AG04449 (cell line): ENCODE measurements at regions of chr11 and their contacts with region 1.

Region 1: GRCh38 chr11:45371251-45372115 is 85.3 kb upstream of the SYT13 start:
- DNase-seq: no peak
- H3K4me3 ChIP-seq: no peak overlapping the region
- CTCF ChIP-seq: peak; percentile 93

Region 2: DNA sequence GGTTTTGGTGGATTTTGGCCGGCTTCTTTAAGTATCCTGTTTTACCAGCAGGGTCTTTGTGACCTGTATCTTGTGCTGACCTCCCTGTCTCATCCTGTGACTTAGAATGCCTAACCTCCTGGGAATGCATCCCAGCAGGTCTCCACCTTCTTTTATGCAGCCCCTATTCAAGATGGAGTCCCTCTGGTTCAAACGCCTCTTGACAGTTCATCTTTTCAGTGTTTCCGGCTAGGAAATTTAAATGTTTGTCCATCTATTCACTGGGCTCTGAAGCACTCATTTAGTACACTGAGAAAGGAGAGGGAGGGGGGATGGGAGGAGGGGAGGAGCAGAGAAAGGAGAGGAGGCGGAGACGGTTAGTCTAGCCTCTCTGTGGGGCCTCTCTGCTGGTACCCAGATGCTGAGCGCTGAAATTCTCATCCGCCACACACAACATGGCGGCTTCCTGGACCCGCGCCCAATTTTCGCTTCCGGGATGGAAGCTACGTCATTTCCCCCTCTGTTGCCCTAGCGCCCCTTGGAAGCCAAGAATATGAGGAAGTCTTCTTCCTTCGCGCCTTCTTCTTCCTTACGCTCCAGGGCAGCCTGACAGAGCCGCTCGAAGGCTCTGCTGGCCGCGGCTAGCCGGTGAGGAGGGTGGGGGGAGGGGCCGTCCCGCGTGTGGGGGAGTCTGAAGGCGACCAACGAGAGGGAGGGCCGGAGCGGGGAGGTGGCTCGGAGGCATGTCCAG is 16.3 kb before region 1 on chr11:
- CTCF ChIA-PET with region 1: interaction called, 15 read pairs
- POLR2A ChIA-PET with region 1: no interaction called
- DNase-seq: no peak
- H3K4me3 ChIP-seq: peak overlapping the region; percentile 55
- CTCF ChIP-seq: no peak

Region 3: DNA sequence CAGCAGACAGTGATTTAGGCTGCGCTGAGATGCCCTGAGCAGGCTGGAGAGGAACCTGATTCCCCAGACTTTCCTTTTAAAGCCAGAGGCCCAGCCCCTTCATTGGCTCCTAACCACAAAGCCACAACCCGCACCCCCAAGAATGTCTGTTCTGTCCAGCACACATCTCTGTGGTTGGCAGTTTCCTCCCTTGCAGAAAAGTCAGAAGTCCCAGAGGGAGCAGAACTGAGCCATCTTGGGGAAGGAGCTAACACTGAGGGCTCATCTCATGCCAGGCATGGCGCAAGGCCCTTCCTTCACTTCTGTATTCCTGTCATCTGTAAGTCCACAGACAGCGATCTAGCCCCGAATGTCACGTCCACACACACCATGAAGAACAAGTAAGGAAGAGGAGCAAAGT is 11.7 kb after region 1 on chr11:
- CTCF ChIA-PET with region 1: interaction called, 39 read pairs
- POLR2A ChIA-PET with region 1: no interaction called
- DNase-seq: peak; percentile 31
- H3K4me3 ChIP-seq: no peak overlapping the region
- CTCF ChIP-seq: no peak

Region 4: DNA sequence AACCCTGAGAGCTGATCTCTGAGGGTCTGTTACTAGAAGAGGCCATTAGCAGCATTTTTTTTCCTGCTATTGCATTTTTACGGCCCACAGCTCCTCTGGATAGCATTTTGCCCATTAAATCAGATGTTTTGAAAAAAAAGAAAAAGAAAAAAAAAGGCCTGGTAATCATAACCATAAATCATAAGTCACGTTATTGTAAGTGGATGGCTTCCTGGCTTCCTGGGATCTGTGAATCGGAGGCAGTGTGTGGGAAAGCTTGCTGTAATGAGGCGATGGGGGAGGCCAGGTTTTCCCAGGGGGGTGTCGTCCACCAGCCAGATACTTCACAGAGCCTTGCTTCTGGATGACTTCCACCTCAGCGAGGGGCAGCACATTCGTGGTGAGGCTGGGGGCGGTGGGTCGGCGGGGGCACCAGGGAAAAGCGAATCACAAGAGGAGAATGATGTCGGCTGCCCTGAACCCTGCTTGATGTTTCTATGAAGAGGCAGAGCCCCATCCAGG is 21.2 kb after region 1 on chr11:
- CTCF ChIA-PET with region 1: interaction called, 13 read pairs
- POLR2A ChIA-PET with region 1: no interaction called
- DNase-seq: no peak
- H3K4me3 ChIP-seq: no peak overlapping the region
- CTCF ChIP-seq: no peak

Region 5: GRCh38 chr11:45655347-45655756 is 283.9 kb after region 1 on chr11:
- CTCF ChIA-PET with region 1: interaction called, 210 read pairs
- POLR2A ChIA-PET with region 1: no interaction called
- DNase-seq: no peak
- H3K4me3 ChIP-seq: no peak overlapping the region
- CTCF ChIP-seq: peak; percentile 96